ENCODE measurements at regions of chr5 and their contacts with region 1.

Region 1: GRCh38 chr5:149141224-149141956 is at the start of gene ABLIM3:
- DNase-seq: peak; percentile 76
- ATAC-seq: peak; percentile 84
- H3K4me3 Mint-ChIP-seq: peak within 1 kb of the TSS; percentile 71
- H3K27ac Mint-ChIP-seq: no peak within 1 kb of the TSS
- H3K4me1 Mint-ChIP-seq: peaks cover 7% of the 10 kb centered on the region; the same call in 1 of the 2 replicates
- H3K27me3 Mint-ChIP-seq: peaks cover 34% of the 10 kb centered on the region
- CTCF ChIP-seq: peak; percentile 92
- total RNA-seq, gene ABLIM3: 0.33 to 0.69 TPM (median 0.46 TPM) in 3 replicates

Region 2: DNA sequence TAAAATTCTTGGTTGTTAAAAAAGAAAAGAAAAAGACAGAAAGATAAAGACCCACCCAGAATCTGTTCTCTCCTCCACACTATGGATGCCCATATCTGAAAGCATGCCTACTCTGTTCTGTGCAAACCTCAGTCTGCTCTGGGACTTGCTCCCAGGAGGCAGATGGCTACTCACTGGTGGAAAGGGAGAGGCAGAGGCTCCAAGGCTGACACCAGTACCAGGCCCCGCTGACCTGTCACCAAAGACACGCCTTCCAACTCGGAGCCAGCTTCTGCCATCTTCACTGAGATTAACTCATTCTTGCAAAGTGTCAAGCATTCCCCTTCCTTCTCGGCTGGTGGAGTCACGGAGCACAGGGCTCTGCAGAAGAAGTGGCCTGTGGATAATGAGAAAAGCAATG is 100.1 kb before region 1 on chr5:
- CTCF ChIA-PET with region 1: no interaction called
- POLR2A ChIA-PET with region 1: no interaction called
- DNase-seq: no peak
- ATAC-seq: no peak
- H3K4me3 Mint-ChIP-seq: no peak overlapping the region
- H3K27ac Mint-ChIP-seq: peak overlapping the region; percentile 1; the same call in 1 of the 2 replicates
- H3K4me1 Mint-ChIP-seq: no peaks in the 10 kb centered on the region
- H3K27me3 Mint-ChIP-seq: no peaks in the 10 kb centered on the region; the same call in 1 of the 2 replicates
- CTCF ChIP-seq: no peak

Region 3: DNA sequence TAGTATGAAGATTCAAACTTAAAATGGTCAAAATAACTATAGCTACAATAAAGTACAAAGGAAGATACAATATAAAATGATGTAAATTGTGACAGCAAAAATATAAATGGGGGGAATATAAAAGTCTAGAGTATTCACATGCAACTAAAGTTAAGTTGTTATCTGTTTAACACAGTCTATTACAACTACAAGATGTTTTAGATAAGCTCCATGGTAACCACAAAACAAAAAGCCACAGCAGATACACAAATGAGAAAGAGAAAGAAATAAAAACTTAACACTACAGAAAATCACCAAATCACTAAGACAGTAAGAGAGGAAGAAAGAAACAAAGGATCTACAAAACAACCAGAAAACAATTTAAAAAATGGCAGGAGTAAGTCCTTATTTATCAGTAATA is 61.5 kb before region 1 on chr5:
- CTCF ChIA-PET with region 1: no interaction called
- POLR2A ChIA-PET with region 1: no interaction called
- DNase-seq: no peak
- ATAC-seq: no peak
- H3K4me3 Mint-ChIP-seq: no peak overlapping the region
- H3K27ac Mint-ChIP-seq: no peak overlapping the region
- H3K4me1 Mint-ChIP-seq: no peaks in the 10 kb centered on the region
- H3K27me3 Mint-ChIP-seq: peaks cover 2% of the 10 kb centered on the region; the same call in 1 of the 2 replicates
- CTCF ChIP-seq: no peak

Region 4: DNA sequence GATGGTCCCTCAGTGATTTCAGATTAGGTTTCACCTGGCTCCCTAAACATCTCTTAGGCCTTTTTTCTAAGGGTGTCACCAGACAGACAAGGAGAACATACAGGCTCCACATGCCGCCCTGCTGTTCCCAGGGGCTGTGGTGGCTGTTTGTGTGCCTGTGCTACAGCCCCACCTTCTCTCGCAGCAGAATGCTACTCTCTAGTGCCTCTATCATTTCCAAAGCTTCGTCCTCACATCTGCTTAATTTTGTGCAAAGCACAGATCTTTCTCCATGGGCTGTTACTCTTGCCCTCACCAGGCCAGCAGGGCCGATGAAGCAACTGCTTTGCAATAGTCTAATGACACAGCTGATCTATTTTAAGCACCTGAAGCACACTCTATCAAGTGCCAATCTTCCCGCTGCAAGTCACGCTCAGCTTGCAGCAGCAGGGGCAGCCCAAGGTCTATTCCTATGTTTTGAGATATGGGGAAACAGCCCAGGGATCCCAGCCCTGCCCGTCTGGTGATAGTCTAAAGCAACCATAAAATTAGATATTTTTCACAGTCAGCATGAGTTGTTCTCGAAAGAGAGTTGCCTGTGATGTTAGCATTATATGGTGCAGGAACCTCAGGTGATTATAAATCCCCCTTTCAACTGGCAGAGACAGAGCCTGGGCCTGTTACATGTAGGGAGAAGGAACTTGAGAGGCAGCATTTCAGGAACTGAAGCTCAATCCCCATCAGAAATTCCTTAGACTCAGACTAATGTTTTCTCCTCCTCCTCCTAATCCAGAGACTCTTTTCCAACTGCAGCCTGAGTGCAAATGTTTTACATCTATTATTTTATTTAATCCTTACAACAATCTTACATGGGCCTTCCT is 12.6 kb after region 1 on chr5:
- CTCF ChIA-PET with region 1: interaction called, 23 read pairs
- POLR2A ChIA-PET with region 1: no interaction called
- DNase-seq: no peak
- ATAC-seq: no peak
- H3K4me3 Mint-ChIP-seq: no peak overlapping the region
- H3K27ac Mint-ChIP-seq: no peak overlapping the region
- H3K4me1 Mint-ChIP-seq: peaks cover 9% of the 10 kb centered on the region
- H3K27me3 Mint-ChIP-seq: no peaks in the 10 kb centered on the region; the same call in 1 of the 2 replicates
- CTCF ChIP-seq: no peak

Region 5: GRCh38 chr5:149221326-149221725 is 79.9 kb after region 1 on chr5:
- CTCF ChIA-PET with region 1: interaction called, 54 read pairs
- POLR2A ChIA-PET with region 1: no interaction called
- DNase-seq: no peak
- ATAC-seq: no peak
- H3K4me3 Mint-ChIP-seq: no peak overlapping the region
- H3K27ac Mint-ChIP-seq: no peak overlapping the region
- H3K4me1 Mint-ChIP-seq: no peaks in the 10 kb centered on the region
- H3K27me3 Mint-ChIP-seq: no peaks in the 10 kb centered on the region; the same call in 1 of the 2 replicates
- CTCF ChIP-seq: no peak

Region 6: DNA sequence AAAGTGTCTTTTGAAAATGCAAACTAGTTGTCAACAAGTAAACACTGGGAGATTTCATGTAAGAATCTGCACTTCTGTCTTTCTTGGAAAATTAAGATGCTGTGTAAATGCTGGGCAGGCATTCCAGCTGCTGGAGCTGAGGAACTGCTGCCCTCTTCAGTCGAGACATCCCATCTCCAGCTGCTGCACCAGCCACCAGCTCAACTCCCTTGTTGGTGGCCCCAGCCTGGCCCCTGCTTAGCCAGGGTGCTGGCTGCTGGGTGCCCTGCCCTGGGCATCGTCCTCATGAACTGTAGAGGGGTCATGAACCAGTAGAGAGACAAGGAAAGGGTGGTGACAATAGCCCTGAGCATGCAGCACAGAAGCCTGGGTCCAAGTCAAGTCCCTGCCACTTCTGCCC is 97.2 kb after region 1 on chr5:
- CTCF ChIA-PET with region 1: interaction called, 29 read pairs
- POLR2A ChIA-PET with region 1: no interaction called
- DNase-seq: no peak
- ATAC-seq: no peak; the same call in 1 of the 2 replicates
- H3K4me3 Mint-ChIP-seq: no peak overlapping the region
- H3K27ac Mint-ChIP-seq: no peak overlapping the region
- H3K4me1 Mint-ChIP-seq: peaks cover 3% of the 10 kb centered on the region; the same call in 1 of the 2 replicates
- H3K27me3 Mint-ChIP-seq: peaks cover 4% of the 10 kb centered on the region
- CTCF ChIP-seq: no peak

Region 7: GRCh38 chr5:149282022-149282984 is 140.9 kb after region 1 on chr5:
- CTCF ChIA-PET with region 1: no interaction called
- POLR2A ChIA-PET with region 1: no interaction called
- DNase-seq: no peak
- ATAC-seq: no peak
- H3K4me3 Mint-ChIP-seq: no peak overlapping the region
- H3K27ac Mint-ChIP-seq: no peak overlapping the region
- H3K4me1 Mint-ChIP-seq: peaks cover 4% of the 10 kb centered on the region
- H3K27me3 Mint-ChIP-seq: peaks cover 4% of the 10 kb centered on the region; the same call in 1 of the 2 replicates
- CTCF ChIP-seq: no peak

Measured in WTC11 (cell line).